HepG2 (cell line): ENCODE measurements at regions of chr3 and their contacts with region 1.

Region 1: GRCh38 chr3:179322286-179323196 is at the start of gene ZNF639:
- DNase-seq: peak; percentile 78
- ATAC-seq: peak; percentile 92
- H3K4me3 ChIP-seq: peak within 1 kb of the TSS; percentile 84 to 99 (median 92)
- H3K27ac ChIP-seq: peak within 1 kb of the TSS; percentile 85
- H3K4me1 ChIP-seq: peaks cover 48% of the 10 kb centered on the region
- H3K27me3 ChIP-seq: no peaks in the 10 kb centered on the region; a peak in 1 of 5 replicates
- CTCF ChIP-seq: peak; percentile 81
- EP300 ChIP-seq: peak in 1 of 2 experiments; percentile 43; a peak in 2 of 4 replicates
- POLR2A ChIP-seq: peak; percentile 51 to 69; a peak in 1 of 4 replicates
- RAD21 ChIP-seq: peak; percentile 80
- total RNA-seq, gene ZNF639: 42.4 and 46.7 TPM in 2 replicates

Region 2: GRCh38 chr3:178436773-178437172 is 885.8 kb before region 1 on chr3:
- CTCF ChIA-PET with region 1: no interaction called
- POLR2A ChIA-PET with region 1: no interaction called
- in situ Hi-C with region 1: loop called (anchors 25 kb)
- intact Hi-C with region 1: no loop called
- DNase-seq: no peak
- ATAC-seq: no peak
- H3K4me3 ChIP-seq: no peak overlapping the region
- H3K27ac ChIP-seq: no peak overlapping the region
- H3K4me1 ChIP-seq: no peaks in the 10 kb centered on the region
- H3K27me3 ChIP-seq: no peaks in the 10 kb centered on the region
- CTCF ChIP-seq: peak; percentile 41
- EP300 ChIP-seq: no peak
- POLR2A ChIP-seq: no peak
- RAD21 ChIP-seq: no peak

Region 3: GRCh38 chr3:179071550-179072397 is 250.8 kb before region 1 on chr3 and contains the start of gene ZMAT3:
- CTCF ChIA-PET with region 1: interaction called, 3 read pairs
- POLR2A ChIA-PET with region 1: no interaction called
- in situ Hi-C with region 1: no loop called
- intact Hi-C with region 1: loop called (anchors 2 kb)
- DNase-seq: peak; percentile 71
- ATAC-seq: peak; percentile 96
- H3K4me3 ChIP-seq: peak within 1 kb of the TSS; percentile 82 to 91 (median 87)
- H3K27ac ChIP-seq: peak within 1 kb of the TSS; percentile 67
- H3K4me1 ChIP-seq: peaks cover 35% of the 10 kb centered on the region
- H3K27me3 ChIP-seq: peaks cover 0 to 8% of the 10 kb centered on the region in 2 experiments; a peak in 3 of 5 replicates
- CTCF ChIP-seq: no peak
- EP300 ChIP-seq: no peak
- POLR2A ChIP-seq: peak; percentile 56 to 91; a peak in 3 of 4 replicates
- RAD21 ChIP-seq: no peak
- total RNA-seq, gene ZMAT3: 11.4 and 19.4 TPM in 2 replicates

Region 4: DNA sequence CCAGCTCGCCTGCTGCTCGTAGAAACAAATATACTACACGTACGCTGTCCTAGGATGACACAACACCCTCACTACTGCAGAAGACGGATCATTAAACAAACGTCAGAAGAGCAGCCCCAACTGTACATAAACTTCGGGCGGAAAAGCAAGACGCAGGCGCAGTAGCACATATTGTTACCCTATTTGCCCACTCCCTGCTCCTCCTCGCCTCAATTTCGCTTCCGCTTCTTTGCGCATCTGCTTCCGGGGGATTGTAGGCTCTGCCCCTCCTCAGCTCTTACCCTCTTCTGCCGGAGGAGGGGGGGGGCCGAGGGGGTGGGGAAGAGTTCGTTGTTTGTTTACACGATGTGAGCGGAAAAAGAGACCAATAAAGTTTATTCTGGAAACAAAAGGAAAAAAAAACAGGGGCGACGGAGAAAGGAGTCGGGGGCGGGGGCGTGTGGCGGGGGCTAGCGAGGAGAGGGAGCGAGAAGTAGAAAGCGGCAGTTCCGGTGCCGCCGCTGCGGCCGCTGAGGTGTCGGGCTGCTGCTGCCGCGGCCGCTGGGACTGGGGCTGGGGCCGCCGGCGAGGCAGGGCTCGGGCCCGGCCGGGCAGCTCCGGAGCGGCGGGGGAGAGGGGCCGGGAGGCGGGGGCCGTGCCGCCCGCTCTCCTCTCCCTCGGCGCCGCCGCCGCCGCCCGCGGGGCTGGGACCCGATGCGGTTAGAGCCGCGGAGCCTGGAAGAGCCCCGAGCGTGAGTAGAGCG is 174.5 kb before region 1 on chr3 and contains the start of gene PIK3CA:
- CTCF ChIA-PET with region 1: interaction called, 5 read pairs
- POLR2A ChIA-PET with region 1: interaction called, 4 read pairs
- in situ Hi-C with region 1: loop called (anchors 5 kb)
- intact Hi-C with region 1: loop called (anchors 1 kb)
- DNase-seq: peak; percentile 97
- ATAC-seq: peak; percentile 91
- H3K4me3 ChIP-seq: peak within 1 kb of the TSS; percentile 92 to 100 (median 98)
- H3K27ac ChIP-seq: peak within 1 kb of the TSS; percentile 87
- H3K4me1 ChIP-seq: peaks cover 22% of the 10 kb centered on the region
- H3K27me3 ChIP-seq: no peaks in the 10 kb centered on the region; a peak in 1 of 5 replicates
- CTCF ChIP-seq: no peak
- EP300 ChIP-seq: peak in 1 of 2 experiments; percentile 21; a peak in 1 of 4 replicates
- POLR2A ChIP-seq: peak; percentile 27 to 49; a peak in 2 of 4 replicates
- RAD21 ChIP-seq: peak; percentile 22; the same call in 1 of the 2 replicates
- total RNA-seq, gene PIK3CA: 11.4 and 20.4 TPM in 2 replicates

Region 5: DNA sequence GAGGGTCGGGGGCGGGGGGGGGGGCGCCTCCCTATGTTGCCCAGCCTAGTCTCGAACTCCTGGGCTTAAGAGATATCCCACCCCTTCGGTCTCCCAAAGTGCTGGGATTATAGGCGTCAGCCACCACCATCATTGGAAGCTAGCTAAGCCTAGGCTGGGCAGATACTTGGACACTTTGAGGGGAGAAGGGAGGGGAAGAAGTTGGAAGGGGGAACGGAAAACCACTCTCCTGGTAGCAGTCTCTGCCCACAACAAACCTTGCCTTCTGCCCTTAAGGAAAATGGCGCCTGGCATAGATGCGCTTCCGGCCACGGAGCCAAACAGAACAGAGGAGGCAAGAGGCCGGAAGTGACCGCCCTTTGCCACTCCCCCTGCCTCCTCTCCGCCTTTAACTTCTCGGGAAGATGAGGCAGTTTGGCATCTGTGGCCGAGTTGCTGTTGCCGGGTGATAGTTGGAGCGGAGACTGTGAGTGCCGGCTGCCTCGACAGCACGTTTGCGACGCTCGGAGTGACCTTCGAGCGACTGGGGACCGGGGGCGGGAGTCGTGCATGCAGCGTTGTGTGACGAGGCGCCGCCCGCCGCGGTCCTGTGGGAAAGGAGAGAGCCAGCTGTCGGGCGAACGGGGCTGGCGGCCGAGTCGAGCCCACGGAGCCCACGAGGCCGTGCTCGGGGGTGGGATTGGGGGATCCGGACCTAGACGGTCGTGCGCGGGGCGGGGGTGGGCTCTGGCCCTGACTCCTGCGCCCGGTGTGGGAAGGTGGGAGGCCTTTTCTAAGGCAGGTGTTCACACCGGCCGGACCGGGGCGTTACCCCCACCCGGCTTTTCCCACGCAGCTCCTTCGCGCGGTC is 25.0 kb after region 1 on chr3 and contains the start of gene MFN1:
- CTCF ChIA-PET with region 1: no interaction called
- POLR2A ChIA-PET with region 1: interaction called, 6 read pairs
- in situ Hi-C with region 1: no loop called
- intact Hi-C with region 1: loop called (anchors 1 kb)
- DNase-seq: peak; percentile 93
- ATAC-seq: peak; percentile 99
- H3K4me3 ChIP-seq: peak within 1 kb of the TSS; percentile 75 to 97 (median 92)
- H3K27ac ChIP-seq: peak within 1 kb of the TSS; percentile 83
- H3K4me1 ChIP-seq: peaks cover 14% of the 10 kb centered on the region; the same call in 1 of the 2 replicates
- H3K27me3 ChIP-seq: no peaks in the 10 kb centered on the region; a peak in 1 of 5 replicates
- CTCF ChIP-seq: no peak
- EP300 ChIP-seq: no peak
- POLR2A ChIP-seq: peak; percentile 86 to 87
- RAD21 ChIP-seq: no peak
- total RNA-seq, gene MFN1: 37.5 and 58.4 TPM in 2 replicates

Region 6: DNA sequence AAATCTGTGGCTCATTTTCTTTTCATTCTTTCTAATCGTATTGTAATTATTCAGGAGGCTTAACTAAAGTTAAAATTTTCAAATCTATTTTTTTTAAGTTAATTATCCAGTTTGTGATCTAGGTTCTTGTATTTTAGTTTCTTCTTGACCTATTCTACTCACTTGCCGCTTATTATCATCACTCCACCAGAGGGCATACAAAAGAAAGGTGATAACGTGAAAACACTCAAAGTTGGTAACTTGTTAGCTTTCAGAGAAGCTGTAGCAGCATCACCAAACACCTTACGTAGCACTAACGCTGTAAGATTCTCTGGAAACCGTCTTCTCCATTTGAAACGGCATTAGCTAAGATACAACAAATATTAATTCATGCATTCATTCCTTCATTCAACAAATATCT is 124.0 kb after region 1 on chr3:
- CTCF ChIA-PET with region 1: no interaction called
- POLR2A ChIA-PET with region 1: no interaction called
- in situ Hi-C with region 1: no loop called
- intact Hi-C with region 1: no loop called
- DNase-seq: peak; percentile 27
- ATAC-seq: peak; percentile 64
- H3K4me3 ChIP-seq: no peak overlapping the region
- H3K27ac ChIP-seq: no peak overlapping the region
- H3K4me1 ChIP-seq: no peaks in the 10 kb centered on the region
- H3K27me3 ChIP-seq: peaks cover 2 to 4% of the 10 kb centered on the region in 2 experiments; a peak in 1 of 5 replicates
- CTCF ChIP-seq: peak; percentile 36
- EP300 ChIP-seq: no peak
- POLR2A ChIP-seq: no peak
- RAD21 ChIP-seq: 0 out of 2 replicates have a peak, but pooled peaks have one; percentile 23

Region 7: GRCh38 chr3:179642871-179643270 is 320.3 kb after region 1 on chr3:
- CTCF ChIA-PET with region 1: no interaction called
- POLR2A ChIA-PET with region 1: no interaction called
- in situ Hi-C with region 1: no loop called
- intact Hi-C with region 1: loop called (anchors 10 kb)
- DNase-seq: no peak
- ATAC-seq: no peak
- H3K4me3 ChIP-seq: no peak overlapping the region
- H3K27ac ChIP-seq: peak overlapping the region; percentile 88
- H3K4me1 ChIP-seq: peaks cover 32% of the 10 kb centered on the region
- H3K27me3 ChIP-seq: no peaks in the 10 kb centered on the region; a peak in 1 of 5 replicates
- CTCF ChIP-seq: no peak
- EP300 ChIP-seq: no peak
- POLR2A ChIP-seq: no peak
- RAD21 ChIP-seq: no peak